Activated CD4-positive, alpha-beta T cell treated with anti-CD3 and anti-CD28 coated beads for 36 hours (primary cell): ENCODE measurements at regions of chr16 and their contacts with region 1.

Region 1: GRCh38 chr16:1610276-1611017 is 1.4 kb downstream of the IFT140 start:
- DNase-seq: peak; percentile 95
- ATAC-seq: peak; percentile 67
- H3K4me3 Mint-ChIP-seq: peak overlapping the region; percentile 88
- H3K27ac Mint-ChIP-seq: peak overlapping the region; percentile 97
- H3K4me1 Mint-ChIP-seq: peaks cover 21% of the 10 kb centered on the region
- H3K27me3 Mint-ChIP-seq: peaks cover 2% of the 10 kb centered on the region

Region 2: DNA sequence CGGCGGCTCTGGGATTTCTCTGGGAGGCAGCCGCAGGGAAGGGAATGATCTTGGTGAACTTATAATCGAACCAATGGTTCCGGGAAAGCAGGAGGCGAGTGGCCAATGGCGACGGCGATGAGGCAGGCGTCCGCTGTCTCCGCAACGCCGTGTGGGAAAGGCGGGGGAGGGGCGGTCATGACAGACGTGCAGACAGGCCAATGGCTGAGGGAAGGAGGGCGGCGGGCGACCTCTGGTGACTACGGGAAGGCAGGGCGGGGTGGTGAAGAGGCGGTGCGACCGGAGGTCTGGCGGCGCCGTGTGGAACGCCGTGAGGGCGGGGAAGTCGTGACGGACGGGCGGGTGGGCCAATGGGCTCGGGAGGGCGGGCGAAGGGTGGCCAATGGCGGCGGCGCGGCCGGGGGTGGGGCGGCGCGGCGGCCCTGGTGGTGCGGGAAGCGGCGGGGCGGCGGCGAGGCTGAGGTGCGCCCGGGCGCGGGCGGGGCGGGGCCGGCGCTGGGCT is 1020.7 kb before region 1 on chr16 and contains the start of gene RAB40C:
- CTCF ChIA-PET with region 1: no interaction called
- POLR2A ChIA-PET with region 1: no interaction called
- intact Hi-C with region 1: loop called in 1 of 2 experiments (anchors 5 kb)
- DNase-seq: peak; percentile 100
- ATAC-seq: peak; percentile 88
- H3K4me3 Mint-ChIP-seq: peak within 1 kb of the TSS; percentile 79
- H3K27ac Mint-ChIP-seq: peak within 1 kb of the TSS; percentile 100
- H3K4me1 Mint-ChIP-seq: peaks cover 22% of the 10 kb centered on the region
- H3K27me3 Mint-ChIP-seq: no peaks in the 10 kb centered on the region
- total RNA-seq, gene RAB40C: 8.9 to 9.6 TPM

Region 3: GRCh38 chr16:1420111-1420540 is 190.3 kb before region 1 on chr16:
- CTCF ChIA-PET with region 1: no interaction called
- POLR2A ChIA-PET with region 1: no interaction called
- intact Hi-C with region 1: loop called in 1 of 2 experiments (anchors 1 kb)
- DNase-seq: peak; percentile 32
- ATAC-seq: no peak
- H3K4me3 Mint-ChIP-seq: peak overlapping the region; percentile 84
- H3K27ac Mint-ChIP-seq: peak overlapping the region; percentile 70
- H3K4me1 Mint-ChIP-seq: peaks cover 25% of the 10 kb centered on the region
- H3K27me3 Mint-ChIP-seq: no peaks in the 10 kb centered on the region

Region 4: DNA sequence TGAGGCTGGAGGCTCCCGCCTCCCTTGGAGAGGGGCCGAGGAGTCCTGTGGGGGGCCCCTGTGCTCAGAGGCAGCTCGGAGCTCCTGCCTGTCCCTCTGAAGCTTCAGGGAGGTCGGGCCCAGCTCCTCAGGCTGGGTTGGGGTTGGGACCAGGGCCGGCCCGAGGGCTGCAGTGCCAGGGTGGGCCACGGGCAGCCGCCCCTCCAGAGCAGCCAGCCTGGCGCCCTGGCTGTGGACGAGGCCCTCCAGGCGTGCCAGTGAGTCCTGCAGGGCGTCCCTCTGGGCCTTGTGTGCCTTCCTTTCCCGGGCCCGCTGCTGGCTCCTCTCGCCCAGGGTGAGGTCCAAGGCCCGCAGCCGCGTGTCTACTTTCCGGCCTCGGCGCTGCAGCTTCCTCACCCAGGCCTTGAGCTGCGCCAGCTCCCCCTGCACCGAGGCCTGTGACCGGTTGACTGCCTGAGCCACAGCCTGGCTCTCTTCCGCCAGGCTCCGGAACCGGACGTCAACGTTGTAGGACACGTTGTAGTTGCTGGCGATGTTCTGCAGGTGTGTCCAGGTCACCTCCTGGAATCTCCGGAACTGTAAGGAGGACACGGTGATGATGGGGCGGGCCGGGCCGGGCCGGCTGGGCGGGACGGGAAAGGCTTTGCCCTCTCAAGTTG is 122.9 kb before region 1 on chr16:
- CTCF ChIA-PET with region 1: no interaction called
- POLR2A ChIA-PET with region 1: no interaction called
- intact Hi-C with region 1: no loop called
- DNase-seq: no peak
- ATAC-seq: no peak
- H3K4me3 Mint-ChIP-seq: no peak overlapping the region
- H3K27ac Mint-ChIP-seq: no peak overlapping the region
- H3K4me1 Mint-ChIP-seq: peaks cover 3% of the 10 kb centered on the region
- H3K27me3 Mint-ChIP-seq: no peaks in the 10 kb centered on the region

Region 5: DNA sequence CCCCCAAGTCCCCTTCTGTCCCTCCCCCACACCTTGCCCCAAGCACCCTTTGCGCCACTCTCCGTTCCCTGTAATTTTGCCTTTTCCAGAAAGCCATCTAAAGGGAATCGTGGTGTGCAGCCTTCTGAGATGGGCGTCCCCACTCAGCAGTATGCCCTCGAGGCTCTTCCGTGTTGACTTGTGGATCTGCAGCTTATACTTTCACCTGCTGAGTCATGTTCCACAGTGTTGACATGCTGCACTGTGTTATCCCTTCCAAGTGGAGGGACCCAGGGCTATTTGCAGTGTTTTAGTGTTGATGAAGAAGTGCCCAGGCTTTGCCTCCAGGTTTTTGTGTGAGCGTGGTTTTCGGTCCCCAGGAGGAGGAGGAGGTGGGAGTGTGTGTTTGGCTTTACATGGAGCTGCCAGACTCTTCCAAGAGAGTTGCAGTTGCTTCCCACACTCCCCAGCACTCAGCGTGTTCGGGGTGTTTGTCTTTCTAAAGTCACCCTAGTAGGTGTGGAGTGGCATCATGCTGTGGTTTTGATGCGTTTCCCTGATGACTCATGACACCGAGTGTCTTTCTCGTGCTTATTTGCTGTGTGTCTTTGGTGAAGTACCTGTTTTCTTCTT is 35.6 kb after region 1 on chr16:
- CTCF ChIA-PET with region 1: no interaction called
- POLR2A ChIA-PET with region 1: no interaction called
- intact Hi-C with region 1: loop called in 1 of 2 experiments (anchors 5 kb)
- DNase-seq: peak; percentile 61
- ATAC-seq: peak; percentile 87
- H3K4me3 Mint-ChIP-seq: no peak overlapping the region
- H3K27ac Mint-ChIP-seq: peak overlapping the region; percentile 65
- H3K4me1 Mint-ChIP-seq: peaks cover 27% of the 10 kb centered on the region
- H3K27me3 Mint-ChIP-seq: no peaks in the 10 kb centered on the region

Region 6: DNA sequence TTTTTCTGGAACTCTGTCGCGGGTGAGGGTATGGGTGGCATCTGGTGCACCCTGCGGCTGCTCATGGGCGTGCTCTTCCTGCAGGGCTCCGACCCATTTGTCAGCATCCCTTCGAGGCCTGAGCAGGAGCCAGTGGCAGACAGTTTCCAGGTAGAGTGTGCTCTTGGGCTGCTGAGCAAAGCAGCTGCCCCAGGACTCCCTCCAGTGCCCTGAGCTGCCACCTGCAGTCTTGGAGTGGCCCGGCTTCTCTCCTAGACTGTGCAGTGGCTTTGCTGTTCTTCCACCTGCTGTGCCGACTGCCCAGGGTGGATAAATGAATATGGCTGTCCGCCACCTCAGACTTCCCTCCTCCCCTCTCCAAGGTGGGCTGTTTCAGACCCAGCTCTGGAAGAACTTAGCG is 56.8 kb after region 1 on chr16:
- CTCF ChIA-PET with region 1: no interaction called
- POLR2A ChIA-PET with region 1: no interaction called
- intact Hi-C with region 1: no loop called
- DNase-seq: no peak
- ATAC-seq: no peak
- H3K4me3 Mint-ChIP-seq: no peak overlapping the region
- H3K27ac Mint-ChIP-seq: no peak overlapping the region
- H3K4me1 Mint-ChIP-seq: no peaks in the 10 kb centered on the region
- H3K27me3 Mint-ChIP-seq: no peaks in the 10 kb centered on the region

Region 7: GRCh38 chr16:1826691-1827575 is 216.5 kb after region 1 on chr16 and contains the starts of genes FAHD1 and HAGH:
- CTCF ChIA-PET with region 1: no interaction called
- POLR2A ChIA-PET with region 1: no interaction called
- intact Hi-C with region 1: loop called in 1 of 2 experiments (anchors 1 kb)
- DNase-seq: peak; percentile 93
- ATAC-seq: peak; percentile 90
- H3K4me3 Mint-ChIP-seq: peak within 1 kb of the TSS; percentile 91
- H3K27ac Mint-ChIP-seq: peak within 1 kb of the TSS; percentile 89
- H3K4me1 Mint-ChIP-seq: peaks cover 27% of the 10 kb centered on the region
- H3K27me3 Mint-ChIP-seq: no peaks in the 10 kb centered on the region
- total RNA-seq, gene FAHD1: 11.6 to 11.9 TPM
- total RNA-seq, gene HAGH: 20.9 to 25.0 TPM

Region 8: GRCh38 chr16:2155091-2156021 is 544.9 kb after region 1 on chr16 and contains the start of gene TRAF7:
- CTCF ChIA-PET with region 1: no interaction called
- POLR2A ChIA-PET with region 1: no interaction called
- intact Hi-C with region 1: loop called in 1 of 2 experiments (anchors 1 kb)
- DNase-seq: peak; percentile 98
- ATAC-seq: peak; percentile 95
- H3K4me3 Mint-ChIP-seq: peak within 1 kb of the TSS; percentile 89
- H3K27ac Mint-ChIP-seq: peak within 1 kb of the TSS; percentile 94
- H3K4me1 Mint-ChIP-seq: peaks cover 31% of the 10 kb centered on the region
- H3K27me3 Mint-ChIP-seq: no peaks in the 10 kb centered on the region
- total RNA-seq, gene TRAF7: 70.7 to 93.7 TPM